WTC11 (cell line): ENCODE measurements at regions of chr12 and their contacts with region 1.

Region 1: GRCh38 chr12:3803865-3804472 is 51.1 kb upstream of the CRACR2A start:
- DNase-seq: peak; percentile 80
- ATAC-seq: peak; percentile 92
- H3K4me3 Mint-ChIP-seq: no peak overlapping the region
- H3K27ac Mint-ChIP-seq: no peak overlapping the region
- H3K4me1 Mint-ChIP-seq: no peaks in the 10 kb centered on the region
- H3K27me3 Mint-ChIP-seq: no peaks in the 10 kb centered on the region
- CTCF ChIP-seq: peak; percentile 51

Region 2: DNA sequence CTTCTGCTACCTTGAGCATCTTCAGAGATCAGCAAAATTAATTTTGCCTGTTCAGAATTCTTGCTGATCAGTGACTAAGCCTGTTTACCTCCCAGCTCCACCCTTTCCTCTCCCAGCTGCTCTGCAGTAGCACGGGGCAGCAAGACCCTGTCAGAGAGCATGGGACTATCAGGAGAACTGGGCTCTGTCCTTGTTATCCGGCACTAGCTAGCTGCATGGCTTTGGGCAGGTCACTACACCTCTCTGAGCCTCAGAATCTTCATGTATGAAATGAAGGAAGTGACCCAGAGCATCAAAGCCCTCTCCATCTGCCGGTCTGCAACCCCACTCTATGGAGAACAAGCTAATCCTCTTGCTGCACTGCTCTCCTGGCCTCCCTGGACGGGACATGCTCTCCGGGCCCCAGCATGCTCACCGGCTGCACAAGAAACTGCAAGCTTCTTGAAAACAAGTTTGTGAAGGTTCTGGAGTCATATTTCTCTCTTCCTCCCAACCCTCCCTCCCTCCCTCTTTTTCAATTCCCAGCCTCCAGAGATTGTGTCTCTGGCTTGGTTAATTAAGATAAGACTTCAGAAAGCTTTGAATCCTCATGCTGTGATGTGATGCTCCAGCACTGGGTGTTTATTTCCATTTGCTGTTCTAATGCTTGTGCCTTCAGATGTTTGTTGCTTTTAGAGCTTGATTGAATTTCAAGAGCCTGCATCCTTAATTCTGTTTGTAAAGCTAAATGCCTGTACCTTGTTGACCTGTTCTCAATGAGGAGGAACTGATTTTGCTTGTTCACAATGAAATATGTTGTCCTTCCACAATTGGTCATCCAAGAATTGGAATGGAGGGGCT is 152.2 kb before region 1 on chr12:
- CTCF ChIA-PET with region 1: interaction called, 10 read pairs
- POLR2A ChIA-PET with region 1: no interaction called
- DNase-seq: no peak
- ATAC-seq: no peak
- H3K4me3 Mint-ChIP-seq: no peak overlapping the region
- H3K27ac Mint-ChIP-seq: no peak overlapping the region
- H3K4me1 Mint-ChIP-seq: peaks cover 7% of the 10 kb centered on the region
- H3K27me3 Mint-ChIP-seq: no peaks in the 10 kb centered on the region; the same call in 1 of the 2 replicates
- CTCF ChIP-seq: no peak

Region 3: DNA sequence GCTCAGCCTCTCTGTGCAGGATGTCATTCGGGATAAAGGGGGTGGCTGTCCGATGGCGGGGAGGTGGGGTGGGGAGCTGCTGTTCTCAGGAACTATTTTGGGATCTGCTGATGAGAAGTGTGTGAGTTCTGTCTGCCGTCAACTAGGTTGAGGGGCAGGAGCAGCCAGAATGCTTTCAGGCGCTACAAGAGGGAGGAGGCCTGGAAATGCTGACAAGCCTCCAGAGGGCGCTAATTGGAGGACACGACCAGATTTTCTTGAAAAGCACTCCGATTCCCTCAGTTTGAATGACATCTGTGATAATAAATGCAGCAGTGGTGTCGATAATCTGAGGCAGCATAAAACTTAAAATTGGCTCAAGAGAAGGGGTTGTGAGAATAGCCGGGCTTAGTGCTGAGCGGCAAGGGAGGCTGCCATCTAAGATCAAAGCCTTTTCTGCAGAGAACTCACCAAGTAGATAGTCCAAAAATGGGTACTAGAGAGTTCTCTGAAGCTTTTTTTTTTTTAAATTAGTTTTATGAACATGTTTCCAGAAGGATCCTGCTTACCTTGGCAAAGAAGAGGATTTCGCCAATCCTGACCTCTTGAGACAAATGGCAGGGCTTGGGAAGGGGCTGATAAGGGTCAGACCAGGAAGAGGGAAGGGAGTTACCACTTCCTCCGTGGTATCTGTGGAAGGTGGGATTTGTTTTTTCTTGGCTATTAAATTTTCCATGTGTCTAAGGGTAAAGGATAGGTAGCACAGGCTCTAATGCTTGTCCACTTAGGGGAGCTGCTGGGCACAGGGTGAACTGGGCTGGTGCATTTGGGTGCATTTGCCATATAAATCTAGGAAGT is 145.4 kb before region 1 on chr12:
- CTCF ChIA-PET with region 1: interaction called, 20 read pairs
- POLR2A ChIA-PET with region 1: no interaction called
- DNase-seq: peak; percentile 73
- ATAC-seq: peak; percentile 71
- H3K4me3 Mint-ChIP-seq: no peak overlapping the region
- H3K27ac Mint-ChIP-seq: no peak overlapping the region
- H3K4me1 Mint-ChIP-seq: peaks cover 8% of the 10 kb centered on the region
- H3K27me3 Mint-ChIP-seq: no peaks in the 10 kb centered on the region; the same call in 1 of the 2 replicates
- CTCF ChIP-seq: peak; percentile 54

Region 4: DNA sequence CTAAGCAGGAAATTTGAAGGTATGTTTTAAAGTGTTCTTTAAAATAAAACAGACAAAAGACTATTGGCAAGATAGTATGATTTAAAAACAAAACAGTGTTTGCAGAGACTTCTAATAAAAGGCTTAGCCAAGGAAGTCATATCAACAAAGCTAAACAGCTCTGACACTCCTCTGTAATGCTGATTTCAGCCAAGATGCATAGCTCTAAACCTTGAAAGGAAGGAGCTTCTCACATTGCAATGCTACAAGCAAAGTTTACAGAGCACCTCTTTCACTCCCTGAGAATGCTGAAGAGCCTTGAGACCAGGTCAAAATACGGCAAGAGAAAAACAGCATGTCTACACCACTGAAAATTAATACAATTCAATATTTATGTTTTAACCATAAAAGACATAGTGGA is 17.5 kb after region 1 on chr12:
- CTCF ChIA-PET with region 1: interaction called, 23 read pairs
- POLR2A ChIA-PET with region 1: no interaction called
- DNase-seq: no peak
- ATAC-seq: peak; percentile 99
- H3K4me3 Mint-ChIP-seq: peak overlapping the region; percentile 16
- H3K27ac Mint-ChIP-seq: peak overlapping the region; percentile 97
- H3K4me1 Mint-ChIP-seq: peaks cover 6% of the 10 kb centered on the region
- H3K27me3 Mint-ChIP-seq: no peaks in the 10 kb centered on the region
- CTCF ChIP-seq: no peak

Region 5: DNA sequence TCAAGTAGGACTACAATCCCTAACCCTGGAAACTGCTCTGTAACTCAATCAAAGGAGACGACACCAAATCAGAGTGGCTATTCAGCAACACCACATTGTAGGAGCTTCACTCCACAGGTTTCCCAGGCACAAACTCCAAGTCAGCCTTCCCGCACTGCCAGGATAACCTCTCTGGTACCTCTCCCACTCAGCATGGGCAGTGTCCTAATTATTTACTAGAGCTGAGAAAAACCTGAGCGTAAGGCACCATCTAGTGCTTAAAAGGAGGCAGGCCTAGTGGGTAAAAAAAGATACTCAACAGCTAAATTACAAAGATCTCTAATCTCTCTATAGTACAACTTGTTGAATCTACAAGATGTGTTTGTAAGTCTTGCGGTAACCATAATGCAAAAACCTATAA is 33.1 kb after region 1 on chr12:
- CTCF ChIA-PET with region 1: interaction called, 12 read pairs
- POLR2A ChIA-PET with region 1: no interaction called
- DNase-seq: no peak
- ATAC-seq: peak; percentile 71
- H3K4me3 Mint-ChIP-seq: no peak overlapping the region
- H3K27ac Mint-ChIP-seq: peak overlapping the region; percentile 71
- H3K4me1 Mint-ChIP-seq: peaks cover 17% of the 10 kb centered on the region
- H3K27me3 Mint-ChIP-seq: no peaks in the 10 kb centered on the region
- CTCF ChIP-seq: no peak

Region 6: GRCh38 chr12:4135919-4136605 is 332.1 kb after region 1 on chr12:
- CTCF ChIA-PET with region 1: no interaction called
- POLR2A ChIA-PET with region 1: no interaction called
- DNase-seq: no peak
- ATAC-seq: no peak
- H3K4me3 Mint-ChIP-seq: peak overlapping the region; percentile 55; the same call in 1 of the 2 replicates
- H3K27ac Mint-ChIP-seq: peak overlapping the region; percentile 97
- H3K4me1 Mint-ChIP-seq: peaks cover 74% of the 10 kb centered on the region
- H3K27me3 Mint-ChIP-seq: no peaks in the 10 kb centered on the region
- CTCF ChIP-seq: no peak